H1 (cell line): ENCODE measurements at regions of chr2 and their contacts with region 1.

Region 1: DNA sequence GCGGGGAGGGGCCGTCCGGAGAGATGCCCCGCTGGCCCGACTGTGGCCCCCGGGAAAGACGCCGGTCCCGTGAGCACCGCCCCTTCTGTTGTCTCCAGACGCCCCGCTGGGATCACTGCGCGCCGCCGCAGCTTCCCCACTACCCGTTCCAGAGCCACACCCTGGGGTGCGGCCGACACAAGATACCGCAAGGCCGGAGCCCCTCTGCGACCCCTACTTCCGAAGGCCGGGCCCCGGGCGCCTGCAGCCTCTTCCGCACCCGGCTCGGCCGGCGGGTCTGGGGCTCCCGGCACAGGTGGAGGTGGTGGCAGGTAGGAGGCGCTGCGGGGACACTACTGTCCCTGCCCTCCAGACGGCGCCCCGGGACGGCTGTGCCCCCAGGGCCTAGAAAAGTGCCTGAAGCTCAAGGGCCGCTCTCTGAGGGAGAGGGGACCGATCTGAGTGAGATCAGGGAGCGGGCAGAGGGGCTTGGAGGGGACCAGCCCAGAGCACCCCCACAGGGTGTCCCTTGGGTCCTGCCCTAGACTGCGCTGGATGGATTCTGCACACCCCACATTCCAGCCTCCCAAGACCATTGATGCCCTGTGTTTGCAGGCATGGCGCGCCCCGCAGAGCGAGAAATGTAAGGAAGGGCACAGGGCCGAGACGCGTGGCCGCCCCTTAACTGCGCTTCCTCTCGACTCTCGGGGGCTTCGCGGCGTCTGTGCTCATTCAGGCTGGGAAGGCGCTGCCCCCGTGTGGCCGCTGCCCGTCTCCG is 80.0 kb downstream of the GFPT1 start:
- DNase-seq: peak; percentile 53 to 89
- H3K4me3 ChIP-seq: peak overlapping the region; percentile 26 to 79 (median 74)
- H3K27ac ChIP-seq: no peak overlapping the region
- H3K4me1 ChIP-seq: peaks cover 0 to 16% (median 9%) of the 10 kb centered on the region in 4 experiments; a peak in 6 of 7 replicates
- H3K27me3 ChIP-seq: peaks cover 0 to 22% (median 13%) of the 10 kb centered on the region in 4 experiments; a peak in 6 of 7 replicates
- CTCF ChIP-seq: peak; percentile 91 to 99 (median 94)
- EP300 ChIP-seq: no peak
- POLR2A ChIP-seq: no peak
- RAD21 ChIP-seq: peak; percentile 94 to 95

Region 2: DNA sequence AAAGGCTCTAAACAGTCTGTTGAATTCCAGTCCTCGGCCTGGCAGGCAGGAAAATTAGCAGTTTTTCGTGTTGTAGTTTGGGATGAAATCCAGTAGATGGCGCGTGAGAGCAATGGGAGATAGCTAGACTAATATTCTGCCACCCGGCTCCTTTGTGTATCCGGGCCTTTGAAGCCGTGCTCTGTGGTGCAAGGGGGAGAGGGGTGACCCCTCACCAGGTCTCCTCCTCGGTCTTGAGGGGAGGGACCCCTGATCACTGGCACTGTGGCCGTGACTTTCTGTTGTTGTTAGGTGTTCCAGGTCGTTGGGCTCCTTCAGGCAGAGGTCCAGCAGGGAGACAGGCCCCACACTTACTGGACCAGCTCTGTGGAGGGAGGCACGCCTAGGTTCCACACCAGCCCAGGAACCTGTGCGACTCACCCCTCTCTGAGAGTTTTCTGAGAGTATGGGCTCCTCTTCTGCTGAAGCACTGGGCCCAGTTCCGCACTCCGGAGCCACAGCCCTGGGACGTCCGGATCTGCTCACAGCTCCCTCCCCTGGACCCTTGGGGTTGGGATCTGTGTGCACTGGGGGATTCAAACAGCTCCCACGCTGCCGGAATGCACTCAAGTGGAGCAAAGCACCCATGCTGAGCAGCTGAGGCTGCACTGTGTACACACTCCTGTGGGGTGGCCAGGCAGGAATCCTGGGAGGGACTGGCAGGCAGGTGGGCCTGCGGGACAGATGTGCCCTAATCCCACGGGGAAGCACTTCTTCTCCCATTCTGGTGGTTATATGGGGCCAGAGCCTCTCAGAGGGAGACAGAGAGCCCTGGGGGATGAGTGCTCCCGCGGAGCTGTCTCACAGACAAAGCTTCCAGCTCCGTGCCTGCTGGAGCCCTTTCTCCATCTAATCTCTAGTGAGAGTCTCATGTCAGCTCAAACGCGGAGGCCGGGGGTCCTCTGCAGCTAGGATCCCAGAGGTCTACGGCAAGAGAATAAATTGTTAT is 363.1 kb before region 1 on chr2:
- CTCF ChIA-PET with region 1: interaction called, 13 read pairs
- POLR2A ChIA-PET with region 1: interaction called, 4 read pairs
- DNase-seq: peak in 1 of 2 experiments; percentile 88
- H3K4me3 ChIP-seq: peak overlapping the region; percentile 42 to 60 (median 50); a peak in 6 of 8 replicates
- H3K27ac ChIP-seq: no peak overlapping the region
- H3K4me1 ChIP-seq: peaks cover 0 to 6% (median 5%) of the 10 kb centered on the region in 4 experiments; a peak in 3 of 7 replicates
- H3K27me3 ChIP-seq: no peaks in the 10 kb centered on the region
- CTCF ChIP-seq: peak; percentile 17 to 76 (median 76)
- EP300 ChIP-seq: no peak
- POLR2A ChIP-seq: no peak
- RAD21 ChIP-seq: peak; percentile 56 to 79

Region 3: DNA sequence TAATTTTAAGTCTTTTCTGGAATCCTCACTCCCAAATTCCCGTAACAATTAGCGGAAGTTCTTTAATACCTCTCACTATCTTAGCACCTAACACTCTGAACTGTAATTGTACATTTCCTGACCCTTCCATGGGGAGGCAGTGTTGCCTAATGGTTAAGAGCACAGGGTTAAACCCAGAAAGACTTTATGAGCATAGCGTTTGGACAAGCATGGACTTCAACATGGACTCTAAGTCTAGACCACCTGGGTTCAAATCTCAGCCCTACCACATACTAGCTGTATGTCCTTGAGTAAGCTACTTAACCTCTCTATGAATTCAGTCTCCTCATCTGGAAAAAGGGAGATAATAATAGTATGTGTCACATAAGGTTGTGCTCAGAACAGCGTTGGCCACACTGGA is 281.0 kb before region 1 on chr2:
- CTCF ChIA-PET with region 1: interaction called, 22 read pairs
- POLR2A ChIA-PET with region 1: no interaction called
- DNase-seq: peak in 1 of 2 experiments; percentile 66
- H3K4me3 ChIP-seq: no peak overlapping the region
- H3K27ac ChIP-seq: no peak overlapping the region
- H3K4me1 ChIP-seq: peaks cover 0 to 2% (median under 1%) of the 10 kb centered on the region in 4 experiments; a peak in 1 of 7 replicates
- H3K27me3 ChIP-seq: no peaks in the 10 kb centered on the region
- CTCF ChIP-seq: peak in 2 of 3 experiments; percentile 64 to 81; a peak in 3 of 4 replicates
- EP300 ChIP-seq: no peak
- POLR2A ChIP-seq: no peak
- RAD21 ChIP-seq: peak; percentile 90 to 91

Region 4: GRCh38 chr2:69163109-69163508 is 143.9 kb before region 1 on chr2:
- CTCF ChIA-PET with region 1: interaction called, 22 read pairs
- POLR2A ChIA-PET with region 1: interaction called, 4 read pairs
- DNase-seq: no peak
- H3K4me3 ChIP-seq: no peak overlapping the region
- H3K27ac ChIP-seq: no peak overlapping the region
- H3K4me1 ChIP-seq: peaks cover 0 to 11% (median 5%) of the 10 kb centered on the region in 4 experiments; a peak in 2 of 7 replicates
- H3K27me3 ChIP-seq: no peaks in the 10 kb centered on the region
- CTCF ChIP-seq: no peak
- EP300 ChIP-seq: no peak
- POLR2A ChIP-seq: no peak
- RAD21 ChIP-seq: no peak

Region 5: DNA sequence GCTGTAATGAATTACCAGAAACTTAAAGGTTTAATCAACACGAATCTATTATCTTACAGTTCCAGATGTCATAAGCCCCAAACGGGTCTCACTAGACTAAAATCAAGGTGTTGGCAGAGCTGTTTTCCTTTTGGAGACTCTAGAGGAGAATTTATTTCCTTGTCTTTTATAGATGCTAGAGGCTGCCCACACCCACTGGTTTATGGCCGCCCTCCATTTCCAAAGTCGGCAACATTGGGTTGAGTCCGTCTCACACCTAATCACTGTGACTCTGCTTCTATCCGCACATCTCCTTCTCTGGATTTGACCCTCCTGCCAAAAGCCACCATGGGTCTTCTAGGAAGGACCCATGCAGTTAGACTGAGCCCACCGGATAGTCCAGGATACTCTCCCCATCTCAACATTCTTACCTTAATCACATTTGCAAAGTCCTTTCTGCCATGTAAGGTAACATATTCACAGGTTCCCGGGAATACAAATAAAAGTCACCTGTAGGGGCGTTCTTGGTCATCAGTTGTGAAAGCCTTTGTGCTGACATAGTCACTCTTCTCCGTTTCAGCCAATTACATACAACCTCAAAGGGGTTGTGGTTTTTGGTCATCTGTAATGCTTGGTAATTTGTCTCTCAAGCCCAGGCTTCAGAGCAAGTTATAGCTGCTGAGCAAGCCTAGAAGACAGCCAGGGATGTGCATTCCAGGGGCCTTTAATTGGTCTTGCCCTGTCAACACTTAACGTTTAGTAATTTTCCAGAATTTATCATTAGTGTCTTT is 114.6 kb before region 1 on chr2:
- CTCF ChIA-PET with region 1: interaction called, 12 read pairs
- POLR2A ChIA-PET with region 1: no interaction called
- DNase-seq: no peak
- H3K4me3 ChIP-seq: no peak overlapping the region
- H3K27ac ChIP-seq: no peak overlapping the region
- H3K4me1 ChIP-seq: peaks cover 0 to 4% (median 0%) of the 10 kb centered on the region in 4 experiments; a peak in 4 of 7 replicates
- H3K27me3 ChIP-seq: no peaks in the 10 kb centered on the region
- CTCF ChIP-seq: peak in 1 of 3 experiments; percentile 27; a peak in 2 of 4 replicates
- EP300 ChIP-seq: no peak
- POLR2A ChIP-seq: no peak
- RAD21 ChIP-seq: peak in 1 of 2 experiments; percentile 27; a peak in 1 of 4 replicates